Spleen (tissue), 13 donors: ENCODE measurements at regions of chr18 and their contacts with region 1.

Region 1: DNA sequence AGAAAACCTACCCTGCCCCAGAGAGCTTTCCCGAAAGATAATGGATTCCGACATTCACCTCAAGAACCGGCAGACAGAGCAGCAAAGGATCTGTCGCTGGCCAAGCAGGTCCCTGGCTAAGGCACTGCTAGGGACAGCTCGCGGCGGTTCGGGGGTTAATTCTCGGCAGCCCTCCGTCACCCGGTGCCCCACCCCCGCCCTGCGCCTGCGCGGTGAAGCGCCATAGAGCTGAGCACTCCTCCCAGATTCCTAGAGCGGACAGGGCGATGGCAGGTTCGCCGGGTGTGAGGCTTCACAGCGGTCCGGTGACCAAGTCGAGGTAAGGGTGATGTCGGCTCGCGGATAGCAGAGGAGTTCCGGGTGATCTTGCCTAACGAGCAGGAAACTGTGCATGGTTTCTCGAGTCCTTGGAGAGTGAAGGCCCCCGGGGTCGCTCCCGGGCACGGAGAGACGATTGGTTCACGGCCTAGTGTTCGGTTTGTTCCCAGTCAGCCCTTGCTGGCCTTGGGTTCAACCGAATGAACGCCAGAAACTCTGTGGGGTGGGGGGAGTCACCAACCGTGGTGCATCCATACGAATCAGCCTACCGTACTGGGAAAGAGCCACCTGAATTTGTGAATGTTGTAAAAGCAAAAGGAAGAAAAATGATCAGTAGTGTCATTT is at the start of gene ZSCAN30:
- DNase-seq: peak; percentile 98
- H3K4me3 ChIP-seq: peak within 1 kb of the TSS; percentile 62 to 74 (median 65)
- H3K27ac ChIP-seq: peak within 1 kb of the TSS; percentile 83 to 92 (median 86)
- H3K4me1 ChIP-seq: peaks cover 10 to 58% (median 36%) of the 10 kb centered on the region in 6 donors
- H3K27me3 ChIP-seq: no peaks in the 10 kb centered on the region
- CTCF ChIP-seq: no peak
- POLR2A ChIP-seq: peak; percentile 47 to 74 (median 66)
- total RNA-seq, gene ZSCAN30: 18.1 to 39.2 (median 26.6) TPM

Region 2: GRCh38 chr18:35240664-35241447 is 49.3 kb before region 1 on chr18 and contains the start of gene ZNF397:
- intact Hi-C with region 1: loop called (anchors 5 kb)
- DNase-seq: peak; percentile 100
- H3K4me3 ChIP-seq: peak within 1 kb of the TSS; percentile 54 to 86 (median 66)
- H3K27ac ChIP-seq: peak within 1 kb of the TSS; percentile 95 to 99 (median 98)
- H3K4me1 ChIP-seq: peaks cover 5 to 27% (median 21%) of the 10 kb centered on the region in 6 donors
- H3K27me3 ChIP-seq: no peaks in the 10 kb centered on the region
- CTCF ChIP-seq: peak in 3 of 11 experiments; percentile 14 to 36 (median 22)
- POLR2A ChIP-seq: peak; percentile 30 to 92 (median 64)
- total RNA-seq, gene ZNF397: 27.4 to 50.7 (median 34.4) TPM

Region 3: GRCh38 chr18:35386600-35387351 is 96.6 kb after region 1 on chr18:
- intact Hi-C with region 1: no loop called
- DNase-seq: no peak
- H3K4me3 ChIP-seq: no peak overlapping the region
- H3K27ac ChIP-seq: no peak overlapping the region
- H3K4me1 ChIP-seq: peaks cover 0 to 8% (median 5%) of the 10 kb centered on the region in 6 donors
- H3K27me3 ChIP-seq: peaks cover 0 to 18% (median 0%) of the 10 kb centered on the region in 7 donors
- CTCF ChIP-seq: peak; percentile 60 to 86 (median 79)
- POLR2A ChIP-seq: no peak